Endothelial cell of umbilical vein (primary cell): ENCODE measurements at regions of chr4 and their contacts with region 1.

Region 1: GRCh38 chr4:185471235-185472102 is at the start of gene CCDC110:
- DNase-seq: peak; percentile 90
- H3K4me3 ChIP-seq: peak within 1 kb of the TSS; percentile 43 to 80 (median 57)
- H3K27ac ChIP-seq: peak within 1 kb of the TSS; percentile 41
- H3K4me1 ChIP-seq: peaks cover 8% of the 10 kb centered on the region
- H3K27me3 ChIP-seq: peaks cover 15% of the 10 kb centered on the region in 2 experiments
- CTCF ChIP-seq: peak; percentile 32 to 57
- POLR2A ChIP-seq: no peak
- total RNA-seq, gene CCDC110: 0.28 and 0.71 TPM in 2 replicates

Region 2: GRCh38 chr4:184066584-184067300 is 1404.7 kb before region 1 on chr4:
- CTCF ChIA-PET with region 1: no interaction called
- POLR2A ChIA-PET with region 1: no interaction called
- dilution Hi-C with region 1: no loop called
- intact Hi-C with region 1: no loop called
- DNase-seq: no peak
- H3K4me3 ChIP-seq: no peak overlapping the region
- H3K27ac ChIP-seq: no peak overlapping the region
- H3K4me1 ChIP-seq: no peaks in the 10 kb centered on the region
- H3K27me3 ChIP-seq: no peaks in the 10 kb centered on the region
- CTCF ChIP-seq: no peak
- POLR2A ChIP-seq: no peak

Region 3: DNA sequence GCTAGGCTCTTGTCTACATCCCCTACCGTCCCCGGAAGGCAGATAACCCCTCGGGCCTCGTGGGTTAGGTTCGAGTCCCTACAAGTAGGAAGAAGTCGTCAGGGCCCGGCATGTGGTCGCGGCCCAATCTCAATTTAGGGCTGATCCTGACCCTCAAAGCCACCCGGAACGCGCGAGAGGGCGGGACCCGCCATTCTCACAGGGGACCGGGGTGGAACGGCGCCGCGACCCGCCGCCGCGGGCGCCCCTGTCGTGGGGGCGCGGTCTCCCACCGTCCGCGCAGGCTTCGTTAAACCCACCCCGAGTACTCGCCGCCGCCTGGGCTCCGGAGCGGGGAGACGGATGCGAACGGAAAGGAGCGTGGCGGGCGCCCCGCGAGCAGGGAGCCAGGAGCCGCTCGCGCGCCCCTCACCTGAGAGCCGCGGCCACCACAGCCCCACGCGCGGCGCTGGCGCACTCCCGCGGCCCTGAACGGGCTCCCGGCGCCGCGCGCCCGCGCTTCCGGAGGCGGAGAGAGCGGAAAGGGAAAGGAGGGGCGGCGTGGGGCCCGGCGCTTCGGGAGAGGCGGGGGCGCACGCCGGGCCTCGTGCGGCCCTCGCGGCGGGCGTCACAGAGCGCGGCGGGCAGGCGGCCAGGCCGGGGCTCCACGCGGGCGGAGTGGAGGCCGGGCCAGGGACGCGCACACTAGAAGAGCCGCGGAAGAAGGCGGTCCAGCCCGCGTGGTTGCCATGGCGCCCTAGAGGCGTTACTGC is 267.8 kb before region 1 on chr4 and contains the start of gene CFAP97:
- CTCF ChIA-PET with region 1: no interaction called
- POLR2A ChIA-PET with region 1: no interaction called
- dilution Hi-C with region 1: no loop called
- intact Hi-C with region 1: loop called (anchors 1 kb)
- DNase-seq: peak; percentile 90
- H3K4me3 ChIP-seq: peak within 1 kb of the TSS; percentile 60 to 89 (median 64)
- H3K27ac ChIP-seq: peak within 1 kb of the TSS; percentile 79
- H3K4me1 ChIP-seq: peaks cover 34% of the 10 kb centered on the region
- H3K27me3 ChIP-seq: no peaks in the 10 kb centered on the region
- CTCF ChIP-seq: no peak
- POLR2A ChIP-seq: peak; percentile 43
- total RNA-seq, gene CFAP97: 17.6 and 22.4 TPM in 2 replicates

Region 4: DNA sequence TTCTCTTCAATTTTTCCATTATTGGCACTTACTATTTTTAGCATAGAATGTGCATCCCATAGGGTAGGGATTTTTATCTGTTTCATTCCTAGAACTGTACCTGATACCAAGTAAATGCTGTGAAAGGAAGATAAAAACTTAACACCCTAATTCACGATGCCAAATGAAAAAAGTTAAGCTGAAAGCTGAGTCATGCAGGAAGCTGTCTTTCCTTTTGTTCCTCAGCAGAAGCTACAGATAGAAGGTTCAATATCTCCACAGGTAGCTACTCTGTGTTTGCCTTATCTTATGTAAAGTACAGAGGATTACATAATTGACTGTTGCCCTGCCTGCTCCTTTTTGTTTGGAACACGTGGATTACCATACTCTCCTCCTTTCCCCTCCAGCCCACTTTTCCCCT is 152.8 kb before region 1 on chr4:
- CTCF ChIA-PET with region 1: no interaction called
- POLR2A ChIA-PET with region 1: no interaction called
- dilution Hi-C with region 1: no loop called
- intact Hi-C with region 1: no loop called
- DNase-seq: peak; percentile 62
- H3K4me3 ChIP-seq: no peak overlapping the region
- H3K27ac ChIP-seq: peak overlapping the region; percentile 35
- H3K4me1 ChIP-seq: peaks cover 10% of the 10 kb centered on the region
- H3K27me3 ChIP-seq: no peaks in the 10 kb centered on the region
- CTCF ChIP-seq: no peak
- POLR2A ChIP-seq: no peak

Region 5: GRCh38 chr4:185425647-185426352 is 45.7 kb before region 1 on chr4 and contains the start of gene UFSP2:
- CTCF ChIA-PET with region 1: no interaction called
- POLR2A ChIA-PET with region 1: no interaction called
- dilution Hi-C with region 1: no loop called
- intact Hi-C with region 1: loop called (anchors 1 kb)
- DNase-seq: peak; percentile 93
- H3K4me3 ChIP-seq: peak within 1 kb of the TSS; percentile 59 to 90 (median 69)
- H3K27ac ChIP-seq: peak within 1 kb of the TSS; percentile 96
- H3K4me1 ChIP-seq: peaks cover 8% of the 10 kb centered on the region
- H3K27me3 ChIP-seq: no peaks in the 10 kb centered on the region
- CTCF ChIP-seq: no peak
- POLR2A ChIP-seq: no peak
- total RNA-seq, gene UFSP2: 25.2 and 26.7 TPM in 2 replicates

Region 6: GRCh38 chr4:185534866-185535611 is 63.6 kb after region 1 on chr4 and contains the start of gene PDLIM3:
- CTCF ChIA-PET with region 1: interaction called, 16 read pairs
- POLR2A ChIA-PET with region 1: no interaction called
- dilution Hi-C with region 1: no loop called
- intact Hi-C with region 1: loop called (anchors 1 kb)
- DNase-seq: peak; percentile 65
- H3K4me3 ChIP-seq: peak within 1 kb of the TSS; percentile 78 to 83 (median 81)
- H3K27ac ChIP-seq: peak within 1 kb of the TSS; percentile 56
- H3K4me1 ChIP-seq: peaks cover 10% of the 10 kb centered on the region
- H3K27me3 ChIP-seq: peaks cover 0 to 6% of the 10 kb centered on the region in 2 experiments
- CTCF ChIP-seq: no peak
- POLR2A ChIP-seq: peak; percentile 53
- total RNA-seq, gene PDLIM3: 9.7 and 12.2 TPM in 2 replicates

Region 7: DNA sequence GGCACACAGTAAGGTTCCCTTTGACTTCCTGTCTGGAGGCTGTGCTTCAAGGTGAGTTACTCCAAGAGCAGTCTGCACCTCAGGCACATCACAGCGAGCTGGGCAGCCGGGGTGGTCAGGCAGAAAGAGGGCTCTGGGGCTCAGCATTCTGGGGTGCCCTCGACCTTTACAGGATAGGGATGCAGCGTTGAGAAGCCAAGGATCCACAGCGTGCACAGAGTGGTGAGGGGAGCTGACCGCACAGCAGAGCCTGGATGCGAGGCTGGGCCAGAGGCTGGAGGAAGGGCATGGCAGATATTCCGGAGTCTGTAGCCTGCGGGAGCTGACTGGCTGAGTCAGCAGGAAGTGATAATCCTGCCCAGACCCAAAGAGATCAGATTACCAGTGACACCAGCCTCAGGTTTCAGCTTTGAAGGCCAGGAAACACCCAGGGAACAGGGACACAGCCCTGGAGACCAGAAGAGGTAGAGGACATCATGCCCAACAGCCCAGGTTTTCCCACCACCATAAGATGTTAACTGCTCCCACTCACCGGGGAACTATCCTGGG is 102.3 kb after region 1 on chr4:
- CTCF ChIA-PET with region 1: interaction called, 3 read pairs
- POLR2A ChIA-PET with region 1: no interaction called
- dilution Hi-C with region 1: no loop called
- intact Hi-C with region 1: loop called (anchors 1 kb)
- DNase-seq: peak; percentile 84
- H3K4me3 ChIP-seq: no peak overlapping the region
- H3K27ac ChIP-seq: peak overlapping the region; percentile 75
- H3K4me1 ChIP-seq: peaks cover 13% of the 10 kb centered on the region
- H3K27me3 ChIP-seq: no peaks in the 10 kb centered on the region
- CTCF ChIP-seq: no peak
- POLR2A ChIP-seq: peak; percentile 45